Activated CD4-positive, alpha-beta T cell treated with anti-CD3 and anti-CD28 coated beads, Interleukin-2, amount 10 ng/mL, durations not matched to agents 24 days and 14 days (primary cell): ENCODE measurements at regions of chr1 and their contacts with region 1.

Region 1: DNA sequence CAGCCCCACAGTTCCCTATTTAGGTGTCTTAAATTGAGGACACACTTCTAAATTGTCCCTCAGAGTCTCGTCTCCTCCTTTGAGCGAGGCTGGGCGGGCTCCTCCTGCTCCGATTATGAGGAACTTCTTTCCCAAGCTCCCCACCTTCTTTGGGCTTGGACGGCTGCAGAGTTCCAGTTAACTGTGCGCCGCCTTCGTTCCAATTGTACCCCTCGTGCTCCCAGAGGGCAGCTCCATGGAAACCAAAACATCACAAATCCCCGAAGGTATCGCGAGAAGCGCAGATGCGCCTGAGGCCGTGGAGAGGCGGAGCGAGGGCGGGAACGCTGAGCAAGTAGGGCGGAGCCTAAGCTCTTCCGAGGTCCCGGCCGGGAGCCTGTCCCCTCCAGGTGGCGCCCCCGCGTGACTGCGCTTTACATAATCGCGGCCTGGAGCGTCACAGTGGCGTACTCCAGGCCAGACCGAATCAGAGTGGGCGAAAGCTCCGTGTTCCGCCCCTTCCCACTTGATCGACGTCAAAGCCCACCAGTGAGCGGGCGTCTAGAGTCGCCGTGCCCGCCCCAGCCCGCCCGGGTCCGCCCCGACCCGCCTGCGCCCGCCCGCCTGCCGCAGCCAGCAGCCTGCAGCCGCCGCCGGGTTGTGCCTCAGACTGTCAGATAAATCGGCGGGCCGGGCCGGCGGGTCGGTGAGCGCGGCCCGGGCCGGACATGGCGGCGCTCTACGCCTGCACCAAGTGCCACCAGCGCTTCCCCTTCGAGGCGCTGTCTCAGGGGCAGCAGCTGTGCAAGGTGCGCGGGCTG is at the start of gene FAM76A:
- DNase-seq: peak; percentile 100
- H3K4me3 Mint-ChIP-seq: peak within 1 kb of the TSS; percentile 89
- H3K27ac Mint-ChIP-seq: peak within 1 kb of the TSS; percentile 98
- H3K4me1 Mint-ChIP-seq: peaks cover 18% of the 10 kb centered on the region
- H3K27me3 Mint-ChIP-seq: peaks cover 2% of the 10 kb centered on the region
- total RNA-seq, gene FAM76A: 11.9 and 13.8 TPM in 2 replicates

Region 2: GRCh38 chr1:27365372-27366112 is 360.0 kb before region 1 on chr1:
- intact Hi-C with region 1: loop called (anchors 5 kb)
- DNase-seq: peak; percentile 90
- H3K4me3 Mint-ChIP-seq: peak overlapping the region; percentile 92
- H3K27ac Mint-ChIP-seq: peak overlapping the region; percentile 90
- H3K4me1 Mint-ChIP-seq: peaks cover 38% of the 10 kb centered on the region
- H3K27me3 Mint-ChIP-seq: no peaks in the 10 kb centered on the region

Region 3: DNA sequence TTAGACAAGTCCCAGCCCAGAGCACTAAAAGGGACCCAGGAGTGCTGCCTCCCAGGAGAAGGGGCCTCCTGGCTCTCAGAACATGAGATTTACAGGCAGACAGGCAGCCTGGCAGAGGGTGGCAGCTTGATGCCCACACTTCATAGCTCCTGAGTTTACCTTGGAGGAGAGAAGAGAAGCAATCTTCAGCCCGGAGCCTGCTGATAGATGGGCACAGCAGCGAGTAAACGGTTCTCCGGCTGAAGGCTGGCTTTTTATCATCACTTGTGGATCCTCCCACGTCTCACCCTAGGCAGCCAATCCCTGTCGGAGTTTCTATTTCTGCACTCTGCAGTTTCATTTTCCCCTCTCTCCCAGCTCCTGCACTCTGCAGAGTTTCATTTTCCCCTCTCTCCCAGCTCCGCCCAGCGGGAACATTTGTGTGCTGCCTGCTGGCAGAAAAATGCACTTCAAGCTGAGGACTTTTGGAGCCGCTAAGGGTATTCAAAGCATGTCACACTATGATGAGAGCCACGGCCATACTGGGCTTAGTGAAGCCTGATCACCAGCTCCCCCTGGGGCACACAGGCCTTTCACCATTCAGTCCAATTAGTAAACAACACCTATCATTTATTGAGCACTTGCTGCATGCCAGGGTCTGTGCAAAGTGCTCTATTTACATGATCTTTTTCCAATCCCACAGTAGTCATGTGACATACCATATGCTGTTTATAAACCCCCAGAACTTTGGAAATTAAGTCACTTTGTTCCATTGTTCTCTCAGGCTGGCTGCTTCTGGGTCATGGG is 53.4 kb before region 1 on chr1 and contains the start of gene IFI6:
- intact Hi-C with region 1: loop called (anchors 1 kb)
- DNase-seq: peak; percentile 96
- H3K4me3 Mint-ChIP-seq: peak within 1 kb of the TSS; percentile 91
- H3K27ac Mint-ChIP-seq: peak within 1 kb of the TSS; percentile 95
- H3K4me1 Mint-ChIP-seq: peaks cover 44% of the 10 kb centered on the region
- H3K27me3 Mint-ChIP-seq: no peaks in the 10 kb centered on the region
- total RNA-seq, gene IFI6: 53.2 and 55.5 TPM in 2 replicates

Region 4: GRCh38 chr1:27772933-27773825 is 47.6 kb after region 1 on chr1 and contains the start of gene STX12:
- intact Hi-C with region 1: loop called (anchors 1 kb)
- DNase-seq: peak; percentile 100
- H3K4me3 Mint-ChIP-seq: peak within 1 kb of the TSS; percentile 86
- H3K27ac Mint-ChIP-seq: peak within 1 kb of the TSS; percentile 98
- H3K4me1 Mint-ChIP-seq: peaks cover 26% of the 10 kb centered on the region
- H3K27me3 Mint-ChIP-seq: peaks cover 1% of the 10 kb centered on the region
- total RNA-seq, gene STX12: 28.5 and 28.8 TPM in 2 replicates

Region 5: GRCh38 chr1:27830621-27831424 is 105.2 kb after region 1 on chr1 and contains the start of gene PPP1R8:
- intact Hi-C with region 1: loop called (anchors 2 kb)
- DNase-seq: peak; percentile 97
- H3K4me3 Mint-ChIP-seq: peak within 1 kb of the TSS; percentile 95
- H3K27ac Mint-ChIP-seq: peak within 1 kb of the TSS; percentile 90
- H3K4me1 Mint-ChIP-seq: peaks cover 22% of the 10 kb centered on the region
- H3K27me3 Mint-ChIP-seq: no peaks in the 10 kb centered on the region
- total RNA-seq, gene PPP1R8: 80.3 TPM in 2 replicates

Region 6: GRCh38 chr1:28280501-28280900 is 554.9 kb after region 1 on chr1:
- intact Hi-C with region 1: no loop called
- DNase-seq: no peak
- H3K4me3 Mint-ChIP-seq: no peak overlapping the region
- H3K27ac Mint-ChIP-seq: no peak overlapping the region
- H3K4me1 Mint-ChIP-seq: peaks cover 2% of the 10 kb centered on the region
- H3K27me3 Mint-ChIP-seq: no peaks in the 10 kb centered on the region